ENCODE measurements at regions of chr1 and their contacts with region 1.

Region 1: GRCh38 chr1:153967082-153968000 is at the start of gene CREB3L4:
- DNase-seq: peak; percentile 77 to 95
- ATAC-seq: peak; percentile 82 to 95 (median 87)
- H3K4me3 ChIP-seq: peak within 1 kb of the TSS; percentile 93
- H3K4me3 Mint-ChIP-seq: peak within 1 kb of the TSS; percentile 99
- H3K27ac ChIP-seq: peak within 1 kb of the TSS; percentile 96
- H3K27ac Mint-ChIP-seq: peak within 1 kb of the TSS; percentile 95 to 98
- H3K4me1 ChIP-seq: peaks cover 47% of the 10 kb centered on the region
- H3K4me1 Mint-ChIP-seq: peaks cover 53 to 58% of the 10 kb centered on the region in 2 donors
- H3K27me3 ChIP-seq: no peaks in the 10 kb centered on the region
- H3K27me3 Mint-ChIP-seq: no peaks in the 10 kb centered on the region
- CTCF ChIP-seq: peak; percentile 36
- total RNA-seq, gene CREB3L4: 10.8 to 16.8 (median 10.9) TPM

Region 2: GRCh38 chr1:153977250-153978240 is 10.2 kb after region 1 on chr1 and contains the start of gene JTB:
- intact Hi-C with region 1: loop called (anchors 1 kb)
- DNase-seq: peak; percentile 76 to 91
- ATAC-seq: peak; percentile 97 to 98 (median 97)
- H3K4me3 ChIP-seq: peak within 1 kb of the TSS; percentile 84
- H3K4me3 Mint-ChIP-seq: peak within 1 kb of the TSS; percentile 89
- H3K27ac ChIP-seq: peak within 1 kb of the TSS; percentile 37
- H3K27ac Mint-ChIP-seq: peak within 1 kb of the TSS; percentile 76 to 89
- H3K4me1 ChIP-seq: peaks cover 16% of the 10 kb centered on the region
- H3K4me1 Mint-ChIP-seq: peaks cover 25 to 30% of the 10 kb centered on the region in 2 donors
- H3K27me3 ChIP-seq: no peaks in the 10 kb centered on the region
- H3K27me3 Mint-ChIP-seq: peaks cover 0 to 4% of the 10 kb centered on the region in 2 donors
- CTCF ChIP-seq: no peak
- total RNA-seq, gene JTB: 96.9 to 107 (median 101) TPM

Region 3: DNA sequence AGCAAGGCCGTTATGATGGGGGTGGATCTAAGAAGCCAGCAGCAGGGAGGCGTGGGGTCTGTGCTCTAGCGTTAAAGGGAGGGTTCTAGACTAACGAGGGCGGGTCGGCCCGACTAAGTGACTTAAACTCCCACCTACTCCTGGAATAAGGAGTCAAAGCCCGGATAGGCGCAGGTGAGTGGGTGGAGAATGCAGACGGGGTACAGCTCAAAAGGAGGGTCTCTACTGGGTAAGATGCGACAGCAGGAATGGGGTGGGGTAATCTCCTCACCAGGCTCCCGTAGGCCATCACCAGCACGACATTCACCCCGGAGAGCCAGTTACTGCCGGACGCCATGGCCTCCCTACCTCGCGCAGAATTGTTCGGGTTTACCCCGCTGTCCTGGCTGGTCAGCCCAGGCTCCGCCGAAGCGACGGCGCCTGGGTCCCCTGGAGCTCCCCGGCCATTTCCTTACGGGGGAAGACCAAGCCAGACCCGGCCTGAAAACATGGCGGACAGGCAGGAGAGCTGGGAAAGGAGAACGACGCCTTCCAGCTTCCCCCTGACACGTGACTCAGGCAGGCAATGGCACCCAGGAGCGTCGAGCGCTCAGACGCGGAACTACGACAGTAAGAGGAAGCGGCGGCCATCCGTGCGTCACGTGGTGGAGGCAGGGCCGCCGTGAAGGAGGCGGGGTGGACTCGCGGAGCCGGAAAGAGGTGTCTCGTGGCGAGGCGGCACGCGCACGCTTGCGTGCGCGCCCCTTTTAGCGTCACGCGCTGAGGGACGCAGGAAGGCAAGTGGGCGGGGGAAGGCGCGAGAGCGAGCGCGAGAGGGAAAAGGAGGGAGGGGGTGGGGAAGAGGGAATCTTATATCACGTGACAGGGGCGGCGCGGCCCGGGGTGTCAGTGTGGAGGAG is 253.0 kb after region 1 on chr1 and contains the start of gene UBAP2L:
- intact Hi-C with region 1: loop called (anchors 10 kb)
- DNase-seq: peak; percentile 98 to 100
- ATAC-seq: peak; percentile 85 to 94 (median 90)
- H3K4me3 ChIP-seq: peak within 1 kb of the TSS; percentile 96
- H3K4me3 Mint-ChIP-seq: peak within 1 kb of the TSS; percentile 96
- H3K27ac ChIP-seq: peak within 1 kb of the TSS; percentile 95
- H3K27ac Mint-ChIP-seq: peak within 1 kb of the TSS; percentile 97 to 98
- H3K4me1 ChIP-seq: peaks cover 21% of the 10 kb centered on the region
- H3K4me1 Mint-ChIP-seq: peaks cover 63 to 75% of the 10 kb centered on the region in 2 donors
- H3K27me3 ChIP-seq: no peaks in the 10 kb centered on the region
- H3K27me3 Mint-ChIP-seq: peaks cover 0 to 2% of the 10 kb centered on the region in 2 donors
- CTCF ChIP-seq: no peak
- total RNA-seq, gene UBAP2L: 195 to 220 (median 218) TPM